Keratinocyte (primary cell): ENCODE measurements at regions of chr20 and their contacts with region 1.

Region 1: DNA sequence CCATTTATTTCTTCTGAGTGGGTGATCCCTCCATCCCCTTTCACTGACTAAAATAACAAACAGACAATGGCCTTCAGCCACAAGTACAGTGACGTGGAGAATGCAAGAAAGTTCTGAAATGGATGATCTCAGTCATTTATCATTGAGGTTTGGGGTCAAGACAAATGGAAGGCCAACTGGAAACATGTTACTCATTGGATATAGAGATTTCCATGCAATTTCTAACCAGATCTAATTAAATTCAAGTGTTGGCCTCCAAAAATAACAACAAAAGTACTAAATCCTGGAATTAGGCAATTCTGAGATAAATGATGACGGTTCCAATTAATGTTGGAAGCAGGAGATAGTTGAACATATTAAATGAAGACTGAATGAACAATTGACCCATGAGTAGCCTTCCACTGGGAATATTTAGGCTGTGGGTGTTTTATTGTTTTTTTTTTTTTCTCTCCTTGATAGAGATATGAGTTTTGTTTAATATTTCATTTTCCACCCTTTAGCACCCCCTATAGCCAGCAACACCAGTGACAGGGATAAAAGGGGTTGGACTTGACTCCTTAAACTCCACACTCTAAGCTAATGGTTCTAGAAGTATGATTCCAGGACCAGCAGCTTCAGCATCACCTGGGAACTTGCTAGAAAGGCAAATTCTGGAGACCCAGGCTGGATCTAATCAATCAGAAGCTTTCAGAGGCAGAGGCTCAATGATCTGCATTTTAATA is 112.8 kb downstream of the BCAS1 start:
- DNase-seq: no peak
- H3K4me3 ChIP-seq: no peak overlapping the region
- H3K27ac ChIP-seq: no peak overlapping the region
- H3K4me1 ChIP-seq: no peaks in the 10 kb centered on the region
- H3K27me3 ChIP-seq: no peaks in the 10 kb centered on the region
- CTCF ChIP-seq: no peak

Region 2: DNA sequence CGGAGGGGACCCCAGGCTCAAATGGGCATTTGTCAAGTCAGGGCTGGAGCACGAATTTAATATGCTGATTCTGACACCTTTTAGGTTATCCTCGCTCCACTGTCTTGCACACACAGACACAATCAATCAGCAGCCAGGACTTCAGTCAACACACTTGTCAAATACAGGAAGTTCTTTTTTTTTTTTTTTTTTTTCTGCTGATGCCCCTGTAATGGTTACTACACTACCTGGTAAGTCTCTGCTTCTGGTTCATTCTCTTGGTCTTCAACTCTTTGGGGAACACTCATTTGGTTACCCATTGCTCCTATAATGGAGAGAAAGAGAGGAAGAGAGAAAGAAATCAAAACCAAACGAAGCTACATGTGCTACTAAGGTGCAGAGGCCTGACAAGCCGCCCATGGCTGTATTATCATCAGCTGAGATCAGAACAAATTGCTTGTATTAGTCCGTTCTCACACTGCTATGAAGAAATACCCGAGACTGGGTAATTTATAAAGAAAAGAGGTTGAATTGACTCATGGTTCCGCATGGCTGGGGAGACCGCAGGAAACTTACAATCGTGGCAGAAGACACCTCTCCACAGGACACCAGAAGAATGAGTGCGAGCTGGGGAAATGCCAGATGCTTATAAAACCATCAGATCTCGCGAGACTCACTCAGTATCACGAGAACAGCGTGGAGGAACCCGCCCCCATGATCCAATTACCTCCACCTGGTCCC is 101.0 kb after region 1 on chr20:
- dilution Hi-C with region 1: loop called (anchors 10 kb)
- DNase-seq: no peak
- H3K4me3 ChIP-seq: no peak overlapping the region
- H3K27ac ChIP-seq: no peak overlapping the region
- H3K4me1 ChIP-seq: peaks cover 11% of the 10 kb centered on the region
- H3K27me3 ChIP-seq: no peaks in the 10 kb centered on the region
- CTCF ChIP-seq: no peak